Posterior vena cava (tissue), 2 donors: ENCODE measurements at regions of chrX and their contacts with region 1.

Region 1: DNA sequence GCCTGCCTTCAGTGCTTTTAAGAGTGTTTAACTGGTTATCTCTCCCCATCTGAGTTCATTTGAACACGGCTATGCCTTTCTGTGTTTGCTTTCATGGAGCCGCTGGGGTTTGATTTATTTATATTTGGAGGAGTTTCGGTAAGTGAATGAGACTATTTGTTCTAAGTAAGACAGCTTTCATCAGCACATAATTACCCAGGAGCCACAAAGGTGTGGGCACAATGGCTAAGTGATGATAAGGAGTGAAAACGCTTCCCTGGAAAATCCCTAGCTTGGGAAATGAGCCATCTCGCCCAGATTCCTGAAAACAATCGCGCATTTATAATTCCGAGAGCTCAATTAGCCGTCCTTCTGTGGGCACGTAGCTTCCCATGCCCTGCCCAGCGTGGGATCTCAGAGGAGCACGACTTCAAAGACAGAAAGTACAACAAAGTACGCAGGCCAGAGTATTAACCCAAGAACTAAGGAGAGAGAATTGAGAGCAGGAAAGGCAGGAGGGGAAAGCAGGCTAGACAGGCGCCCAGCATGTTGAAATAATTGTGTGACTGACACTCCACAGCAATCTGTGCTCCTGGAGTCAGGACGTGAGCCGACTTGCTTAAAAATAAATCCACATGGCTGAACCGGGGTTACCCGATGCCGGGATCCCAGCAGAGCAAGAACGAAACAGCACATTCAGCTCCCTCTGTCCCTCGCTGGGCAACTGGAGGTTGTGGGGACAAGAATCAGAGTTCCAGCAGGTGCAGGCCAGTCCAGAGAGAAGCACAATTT is 99.0 kb downstream of the DHRSX start:
- DNase-seq: no peak

Region 2: GRCh38 chrX:1546691-1547251 is 855.0 kb before region 1 on chrX:
- intact Hi-C with region 1: loop called in 1 of 2 experiments (anchors 5 kb)
- DNase-seq: peak; percentile 59

Region 3: GRCh38 chrX:2449135-2449886 is 47.5 kb after region 1 on chrX:
- intact Hi-C with region 1: no loop called
- DNase-seq: peak; percentile 73

Region 4: DNA sequence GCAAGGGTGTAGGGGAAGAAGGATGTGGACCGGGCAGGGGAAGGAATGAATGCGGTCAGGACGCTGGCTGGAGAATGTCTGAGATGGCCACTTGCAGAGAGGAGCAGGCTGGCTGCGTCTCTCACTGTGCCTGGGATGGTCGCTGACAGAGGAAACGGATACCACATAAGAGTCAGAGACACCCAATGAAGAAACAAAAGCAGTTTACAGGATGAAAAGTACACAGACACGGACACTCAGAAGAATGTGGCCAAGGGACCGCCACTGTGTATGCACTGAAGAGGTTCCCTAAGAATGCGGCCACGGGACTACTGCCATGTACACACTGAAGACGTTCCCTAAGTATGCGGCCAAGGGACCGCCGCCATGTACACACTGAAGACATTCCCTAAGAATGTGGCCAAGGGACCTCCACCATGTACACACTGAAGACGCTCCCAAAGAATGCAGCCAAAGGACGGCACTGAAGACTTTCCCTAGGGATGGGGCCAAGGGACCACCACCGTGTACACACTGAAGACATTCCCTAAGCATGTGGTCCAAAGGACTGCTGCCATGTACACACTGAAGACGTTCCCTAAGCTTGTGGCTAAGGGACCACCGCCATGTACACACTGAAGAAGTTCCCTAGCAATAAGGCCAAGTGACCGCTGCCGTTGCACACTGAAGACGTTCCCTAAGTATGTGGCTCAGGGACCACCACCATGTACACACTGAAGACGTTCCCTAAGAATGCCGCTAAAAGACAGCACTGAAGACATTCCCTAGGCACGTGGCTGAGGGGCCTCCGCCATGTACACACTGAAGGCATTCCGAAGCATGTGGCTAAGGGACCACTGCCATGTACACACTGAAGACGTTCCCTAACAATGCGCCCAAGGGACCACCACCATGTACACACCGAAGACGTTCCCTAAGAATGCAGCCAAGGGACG is 66.8 kb after region 1 on chrX:
- intact Hi-C with region 1: loop called in 1 of 2 experiments (anchors 2 kb)
- DNase-seq: no peak